Ascending aorta (tissue), 2 donors: ENCODE measurements at regions of chr15 and their contacts with region 1.

Region 1: GRCh38 chr15:25863111-25863967 is at the start of gene ATP10A:
- DNase-seq: peak in 1 of 2 donors; percentile 75
- H3K4me3 ChIP-seq: peak within 1 kb of the TSS; percentile 80 to 96
- H3K27ac ChIP-seq: peak within 1 kb of the TSS; percentile 94 to 95
- H3K4me1 ChIP-seq: peaks cover 7 to 18% of the 10 kb centered on the region in 2 donors
- H3K27me3 ChIP-seq: no peaks in the 10 kb centered on the region
- CTCF ChIP-seq: peak in 1 of 3 experiments; percentile 20
- total RNA-seq, gene ATP10A: 26.7 TPM

Region 2: GRCh38 chr15:25438601-25439368 is 424.6 kb before region 1 on chr15 and contains the start of gene UBE3A:
- intact Hi-C with region 1: loop called (anchors 5 kb)
- DNase-seq: peak; percentile 60 to 94
- H3K4me3 ChIP-seq: peak within 1 kb of the TSS; percentile 93 to 99
- H3K27ac ChIP-seq: peak within 1 kb of the TSS; percentile 98 to 100
- H3K4me1 ChIP-seq: peaks cover 0 to 32% of the 10 kb centered on the region in 2 donors
- H3K27me3 ChIP-seq: no peaks in the 10 kb centered on the region
- CTCF ChIP-seq: peak; percentile 8 to 43 (median 17)
- total RNA-seq, gene UBE3A: 34.1 TPM

Region 3: DNA sequence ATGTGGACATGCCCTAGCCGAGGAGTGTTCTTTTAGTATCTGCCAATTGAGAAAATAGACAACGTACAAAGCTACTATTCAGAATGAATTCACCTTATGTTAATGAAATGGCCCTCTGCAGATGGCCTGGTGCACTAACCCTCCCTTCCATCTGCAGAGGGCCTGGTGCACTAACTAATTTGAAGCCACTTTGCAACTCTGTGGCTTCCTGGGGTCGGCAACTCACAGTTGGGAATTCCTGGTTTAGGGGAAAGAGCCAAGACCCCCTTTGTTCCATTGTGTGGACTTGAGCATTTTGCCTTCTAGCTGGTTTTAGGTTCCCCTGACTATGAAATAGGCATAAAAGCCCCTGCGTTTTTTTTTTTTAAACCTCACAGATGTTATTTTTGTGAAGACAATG is 220.2 kb before region 1 on chr15:
- intact Hi-C with region 1: no loop called
- DNase-seq: no peak
- H3K4me3 ChIP-seq: no peak overlapping the region
- H3K27ac ChIP-seq: no peak overlapping the region
- H3K4me1 ChIP-seq: no peaks in the 10 kb centered on the region
- H3K27me3 ChIP-seq: no peaks in the 10 kb centered on the region
- CTCF ChIP-seq: no peak

Region 4: GRCh38 chr15:25670025-25670554 is 193.2 kb before region 1 on chr15:
- intact Hi-C with region 1: loop called (anchors 5 kb)
- DNase-seq: peak; percentile 63 to 87
- H3K4me3 ChIP-seq: peak overlapping the region; percentile 14 to 50
- H3K27ac ChIP-seq: peak overlapping the region; percentile 89 to 92
- H3K4me1 ChIP-seq: peaks cover 20 to 55% of the 10 kb centered on the region in 2 donors
- H3K27me3 ChIP-seq: no peaks in the 10 kb centered on the region
- CTCF ChIP-seq: peak in 1 of 3 experiments; percentile 13

Region 5: DNA sequence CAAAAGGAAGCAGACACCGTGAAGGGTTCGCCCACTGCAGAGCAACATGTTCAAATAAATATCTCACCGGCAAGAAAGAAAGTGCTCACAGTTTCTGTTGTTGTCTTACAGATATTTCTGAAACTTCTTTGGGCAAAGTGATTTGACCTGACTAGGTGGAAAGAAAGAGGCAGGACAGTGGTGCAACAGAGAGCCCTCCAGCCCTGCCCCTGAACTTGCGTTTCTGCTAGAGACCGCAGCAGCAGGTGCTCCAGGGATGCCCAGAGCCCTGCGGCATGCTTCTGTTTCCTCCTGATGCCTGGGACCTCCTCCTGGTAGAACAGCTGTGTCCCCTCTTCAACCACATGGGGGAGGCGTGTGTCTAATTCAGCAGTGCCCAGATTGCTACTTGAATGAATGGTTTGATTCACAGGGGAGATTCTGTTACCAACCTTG is 123.6 kb before region 1 on chr15:
- intact Hi-C with region 1: loop called (anchors 1 kb)
- DNase-seq: peak in 1 of 2 donors; percentile 65
- H3K4me3 ChIP-seq: no peak overlapping the region
- H3K27ac ChIP-seq: peak overlapping the region in 1 of 2 donors; percentile 22
- H3K4me1 ChIP-seq: peaks cover 35 to 59% of the 10 kb centered on the region in 2 donors
- H3K27me3 ChIP-seq: no peaks in the 10 kb centered on the region
- CTCF ChIP-seq: peak in 2 of 3 experiments; percentile 44 to 48

Region 6: GRCh38 chr15:25850154-25851111 is 12.9 kb before region 1 on chr15:
- intact Hi-C with region 1: loop called (anchors 1 kb)
- DNase-seq: peak; percentile 66 to 95
- H3K4me3 ChIP-seq: peak overlapping the region; percentile 47 to 62
- H3K27ac ChIP-seq: peak overlapping the region; percentile 96 to 97
- H3K4me1 ChIP-seq: peaks cover 9 to 78% of the 10 kb centered on the region in 2 donors
- H3K27me3 ChIP-seq: no peaks in the 10 kb centered on the region
- CTCF ChIP-seq: no peak

Region 7: GRCh38 chr15:26095710-26096330 is 232.5 kb after region 1 on chr15:
- intact Hi-C with region 1: no loop called
- DNase-seq: no peak
- H3K4me3 ChIP-seq: no peak overlapping the region
- H3K27ac ChIP-seq: no peak overlapping the region
- H3K4me1 ChIP-seq: no peaks in the 10 kb centered on the region
- H3K27me3 ChIP-seq: no peaks in the 10 kb centered on the region
- CTCF ChIP-seq: peak in 2 of 3 experiments; percentile 18 to 37